WTC11 (cell line): ENCODE measurements at regions of chr1 and their contacts with region 1.

Region 1: GRCh38 chr1:119318466-119319309 is 49.9 kb upstream of the HAO2 start:
- DNase-seq: no peak
- ATAC-seq: no peak
- H3K4me3 Mint-ChIP-seq: no peak overlapping the region
- H3K27ac Mint-ChIP-seq: no peak overlapping the region
- H3K4me1 Mint-ChIP-seq: peaks cover 34% of the 10 kb centered on the region
- H3K27me3 Mint-ChIP-seq: no peaks in the 10 kb centered on the region
- CTCF ChIP-seq: no peak

Region 2: GRCh38 chr1:119266386-119266785 is 52.3 kb before region 1 on chr1:
- CTCF ChIA-PET with region 1: no interaction called
- POLR2A ChIA-PET with region 1: no interaction called
- DNase-seq: no peak
- ATAC-seq: no peak
- H3K4me3 Mint-ChIP-seq: no peak overlapping the region
- H3K27ac Mint-ChIP-seq: no peak overlapping the region
- H3K4me1 Mint-ChIP-seq: no peaks in the 10 kb centered on the region
- H3K27me3 Mint-ChIP-seq: no peaks in the 10 kb centered on the region; the same call in 1 of the 2 replicates
- CTCF ChIP-seq: no peak

Region 3: GRCh38 chr1:119286587-119287181 is 32.0 kb before region 1 on chr1:
- CTCF ChIA-PET with region 1: interaction called, 14 read pairs
- POLR2A ChIA-PET with region 1: no interaction called
- DNase-seq: peak; percentile 65
- ATAC-seq: peak; percentile 98
- H3K4me3 Mint-ChIP-seq: no peak overlapping the region
- H3K27ac Mint-ChIP-seq: no peak overlapping the region
- H3K4me1 Mint-ChIP-seq: peaks cover 22% of the 10 kb centered on the region
- H3K27me3 Mint-ChIP-seq: no peaks in the 10 kb centered on the region
- CTCF ChIP-seq: peak; percentile 69

Region 4: DNA sequence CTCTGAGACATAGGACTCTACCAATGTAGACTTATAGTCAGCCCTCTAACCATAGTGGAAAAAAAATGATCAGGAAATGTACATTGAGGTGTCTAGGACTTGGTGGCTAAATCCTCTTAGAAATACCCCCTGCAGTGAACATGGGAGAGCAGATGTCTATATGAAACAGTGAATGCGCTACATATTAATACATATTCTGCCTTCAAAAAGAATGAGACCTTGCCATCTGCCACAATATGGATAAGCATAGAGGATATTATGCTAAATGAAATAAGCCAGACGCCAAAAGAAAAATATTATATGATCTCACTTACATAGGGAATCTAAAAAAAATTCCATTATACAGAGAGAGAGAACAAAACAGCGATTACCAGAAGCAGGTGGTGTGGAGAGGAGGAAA is 16.7 kb before region 1 on chr1:
- CTCF ChIA-PET with region 1: interaction called, 14 read pairs
- POLR2A ChIA-PET with region 1: no interaction called
- DNase-seq: no peak
- ATAC-seq: no peak
- H3K4me3 Mint-ChIP-seq: no peak overlapping the region
- H3K27ac Mint-ChIP-seq: no peak overlapping the region
- H3K4me1 Mint-ChIP-seq: peaks cover 25% of the 10 kb centered on the region
- H3K27me3 Mint-ChIP-seq: no peaks in the 10 kb centered on the region
- CTCF ChIP-seq: no peak

Region 5: GRCh38 chr1:119347858-119348257 is 29.2 kb after region 1 on chr1:
- CTCF ChIA-PET with region 1: interaction called, 17 read pairs
- POLR2A ChIA-PET with region 1: interaction called, 3 read pairs
- DNase-seq: no peak
- ATAC-seq: peak; percentile 81
- H3K4me3 Mint-ChIP-seq: no peak overlapping the region
- H3K27ac Mint-ChIP-seq: peak overlapping the region; percentile 88
- H3K4me1 Mint-ChIP-seq: peaks cover 34% of the 10 kb centered on the region
- H3K27me3 Mint-ChIP-seq: no peaks in the 10 kb centered on the region; the same call in 1 of the 2 replicates
- CTCF ChIP-seq: no peak

Region 6: GRCh38 chr1:119372490-119373086 is 53.9 kb after region 1 on chr1:
- CTCF ChIA-PET with region 1: interaction called, 41 read pairs
- POLR2A ChIA-PET with region 1: no interaction called
- DNase-seq: peak; percentile 69
- ATAC-seq: peak; percentile 93
- H3K4me3 Mint-ChIP-seq: no peak overlapping the region
- H3K27ac Mint-ChIP-seq: peak overlapping the region; percentile 3; the same call in 1 of the 2 replicates
- H3K4me1 Mint-ChIP-seq: peaks cover 36% of the 10 kb centered on the region
- H3K27me3 Mint-ChIP-seq: peaks cover 3% of the 10 kb centered on the region; the same call in 1 of the 2 replicates
- CTCF ChIP-seq: no peak